Activated CD8-positive, alpha-beta T cell treated with anti-CD3 and anti-CD28 coated beads for 36 hours (primary cell): ENCODE measurements at regions of chr22 and their contacts with region 1.

Region 1: DNA sequence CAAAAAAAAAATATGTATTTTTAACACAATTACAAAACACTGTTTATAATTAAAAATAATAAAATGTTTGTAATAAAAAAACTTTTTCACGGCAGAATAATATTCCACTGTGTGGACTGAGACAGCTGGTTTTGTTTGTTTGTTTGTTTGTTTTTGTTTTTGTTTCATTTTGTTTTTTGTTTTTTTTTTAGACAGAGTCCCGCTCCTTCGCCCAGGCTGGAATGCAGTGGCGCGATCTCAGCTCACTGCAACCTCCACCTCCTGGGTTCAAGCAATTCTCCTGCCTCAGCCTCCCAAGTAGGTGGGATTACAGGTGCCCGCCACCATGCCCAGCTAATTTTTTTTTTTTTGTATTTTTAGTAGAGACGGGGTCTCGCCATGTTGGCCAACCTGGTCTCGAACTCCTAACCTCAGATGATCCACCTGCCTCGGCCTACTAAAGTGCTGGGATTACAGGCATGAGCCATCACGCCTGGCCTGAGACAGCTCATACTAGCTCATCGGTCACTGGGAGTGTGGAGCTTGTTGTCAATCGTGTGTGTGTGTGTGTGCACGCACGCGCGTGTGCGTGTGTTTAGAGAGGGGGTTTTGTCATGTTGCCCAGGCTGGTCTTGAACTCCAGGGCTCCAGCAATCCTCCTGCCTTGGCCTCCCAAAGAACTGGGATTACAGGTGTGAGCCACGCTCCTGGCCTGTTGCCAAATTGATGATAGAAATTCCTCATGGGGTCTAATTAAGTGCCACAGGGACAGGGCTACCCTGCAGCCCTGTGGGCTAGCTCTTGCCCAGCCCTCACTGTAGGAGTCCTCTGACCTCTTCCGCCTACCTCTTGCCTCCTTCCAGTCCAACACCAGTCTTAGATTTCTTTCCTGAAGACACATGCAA is 7.2 kb upstream of the AIFM3 start:
- DNase-seq: no peak
- ATAC-seq: no peak
- H3K4me3 Mint-ChIP-seq: no peak overlapping the region
- H3K27ac Mint-ChIP-seq: no peak overlapping the region
- H3K4me1 Mint-ChIP-seq: peaks cover 23% of the 10 kb centered on the region
- H3K27me3 Mint-ChIP-seq: peaks cover 29% of the 10 kb centered on the region
- CTCF ChIP-seq: no peak

Region 2: GRCh38 chr22:20852076-20852475 is 107.7 kb before region 1 on chr22:
- CTCF ChIA-PET with region 1: no interaction called
- POLR2A ChIA-PET with region 1: no interaction called
- intact Hi-C with region 1: no loop called
- DNase-seq: no peak
- ATAC-seq: no peak
- H3K4me3 Mint-ChIP-seq: no peak overlapping the region
- H3K27ac Mint-ChIP-seq: no peak overlapping the region
- H3K4me1 Mint-ChIP-seq: peaks cover 37% of the 10 kb centered on the region
- H3K27me3 Mint-ChIP-seq: no peaks in the 10 kb centered on the region
- CTCF ChIP-seq: no peak

Region 3: GRCh38 chr22:20867179-20868024 is 92.4 kb before region 1 on chr22:
- CTCF ChIA-PET with region 1: no interaction called
- POLR2A ChIA-PET with region 1: no interaction called
- intact Hi-C with region 1: no loop called
- DNase-seq: no peak
- ATAC-seq: peak; percentile 53
- H3K4me3 Mint-ChIP-seq: no peak overlapping the region
- H3K27ac Mint-ChIP-seq: peak overlapping the region; percentile 4
- H3K4me1 Mint-ChIP-seq: peaks cover 14% of the 10 kb centered on the region
- H3K27me3 Mint-ChIP-seq: no peaks in the 10 kb centered on the region
- CTCF ChIP-seq: no peak

Region 4: GRCh38 chr22:20970939-20971657 is 11.3 kb after region 1 on chr22:
- CTCF ChIA-PET with region 1: interaction called, 10 read pairs
- POLR2A ChIA-PET with region 1: no interaction called
- intact Hi-C with region 1: no loop called
- DNase-seq: no peak
- ATAC-seq: no peak
- H3K4me3 Mint-ChIP-seq: no peak overlapping the region
- H3K27ac Mint-ChIP-seq: no peak overlapping the region
- H3K4me1 Mint-ChIP-seq: no peaks in the 10 kb centered on the region
- H3K27me3 Mint-ChIP-seq: no peaks in the 10 kb centered on the region
- CTCF ChIP-seq: no peak